ENCODE measurements at regions of chr20 and their contacts with region 1.

Region 1: DNA sequence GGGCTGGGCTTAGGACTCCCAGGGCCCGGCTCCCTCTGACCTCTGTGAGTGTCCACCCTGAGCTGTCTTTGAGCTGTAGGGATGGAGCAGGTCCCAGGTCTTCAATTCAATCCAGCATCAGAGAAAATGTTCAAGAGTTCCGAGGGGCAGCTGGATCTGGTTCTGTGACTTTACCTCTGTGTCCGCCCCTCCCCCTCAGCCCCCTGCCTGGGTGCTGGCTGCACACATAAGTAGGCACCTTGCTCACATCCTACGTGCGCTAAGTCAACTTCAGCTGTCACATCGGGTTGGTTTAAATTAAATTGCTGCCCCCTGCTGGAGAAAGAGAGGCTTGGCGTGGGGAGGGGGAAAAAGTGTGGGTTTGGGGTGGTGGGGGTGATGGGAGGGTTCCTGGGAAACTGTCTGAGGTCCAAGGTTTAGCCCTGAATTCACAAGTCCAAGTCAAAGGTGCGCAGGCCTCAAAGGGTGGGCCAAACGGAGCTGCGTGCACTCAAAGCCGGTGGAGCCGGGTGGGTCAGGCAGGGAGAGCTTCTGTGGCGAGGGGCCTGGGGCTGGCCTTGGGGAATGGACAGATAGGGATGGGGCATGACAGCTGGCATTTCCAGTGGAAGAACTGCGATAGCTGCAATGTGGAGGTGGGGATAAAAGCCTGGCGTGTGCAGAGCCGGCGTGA is 3.0 kb downstream of the WFDC5 start:
- DNase-seq: no peak
- H3K4me3 ChIP-seq: no peak overlapping the region
- H3K27ac ChIP-seq: no peak overlapping the region
- H3K4me1 ChIP-seq: peaks cover 13% of the 10 kb centered on the region
- H3K27me3 ChIP-seq: no peaks in the 10 kb centered on the region
- CTCF ChIP-seq: peak; percentile 40 to 52

Region 2: GRCh38 chr20:45067558-45067957 is 44.4 kb before region 1 on chr20:
- CTCF ChIA-PET with region 1: interaction called, 20 read pairs
- dilution Hi-C with region 1: no loop called
- in situ Hi-C with region 1: no loop called
- intact Hi-C with region 1: no loop called
- DNase-seq: peak; percentile 60
- H3K4me3 ChIP-seq: no peak overlapping the region
- H3K27ac ChIP-seq: peak overlapping the region; percentile 28
- H3K4me1 ChIP-seq: peaks cover 24% of the 10 kb centered on the region
- H3K27me3 ChIP-seq: no peaks in the 10 kb centered on the region
- CTCF ChIP-seq: no peak

Region 3: DNA sequence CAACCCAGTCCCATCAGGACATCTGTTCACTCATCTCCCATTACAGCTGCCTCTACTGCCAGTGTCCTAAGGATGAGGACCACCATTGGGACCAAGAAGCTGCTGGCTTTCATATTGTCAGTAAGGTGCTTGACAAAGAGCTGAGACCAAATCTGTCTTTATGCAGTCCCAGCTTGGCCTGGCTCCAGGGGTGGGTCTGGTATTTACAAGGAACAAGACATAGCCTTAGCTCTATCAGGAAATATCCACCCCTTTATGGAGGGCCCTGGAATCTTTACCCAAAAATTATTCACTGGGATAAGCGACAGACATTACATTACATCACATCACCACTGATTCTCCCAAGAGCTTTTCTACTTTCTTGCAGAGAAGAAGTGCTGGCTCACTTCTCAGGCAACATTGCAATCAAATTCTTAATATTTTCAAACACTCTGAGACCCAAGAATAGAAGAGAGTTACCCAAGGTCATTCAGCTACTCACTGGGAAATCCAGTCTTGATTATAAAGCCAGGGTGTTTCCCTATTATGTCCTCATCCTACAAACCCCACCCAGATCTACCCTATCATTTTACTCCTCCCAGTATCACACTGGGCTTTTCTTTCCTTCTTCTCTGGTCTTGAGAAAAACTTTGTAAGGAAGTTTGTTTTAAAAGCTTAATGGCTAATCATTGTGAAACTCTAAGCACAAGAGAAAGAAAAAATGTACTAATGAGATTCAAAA is 51.3 kb after region 1 on chr20:
- CTCF ChIA-PET with region 1: no interaction called
- dilution Hi-C with region 1: loop called (anchors 5 kb)
- in situ Hi-C with region 1: no loop called
- intact Hi-C with region 1: no loop called
- DNase-seq: no peak
- H3K4me3 ChIP-seq: no peak overlapping the region
- H3K27ac ChIP-seq: no peak overlapping the region
- H3K4me1 ChIP-seq: peaks cover 3% of the 10 kb centered on the region
- H3K27me3 ChIP-seq: no peaks in the 10 kb centered on the region
- CTCF ChIP-seq: no peak

Region 4: GRCh38 chr20:45450097-45450818 is 338.3 kb after region 1 on chr20:
- CTCF ChIA-PET with region 1: no interaction called
- dilution Hi-C with region 1: no loop called
- in situ Hi-C with region 1: no loop called
- intact Hi-C with region 1: loop called (anchors 10 kb)
- DNase-seq: peak; percentile 27
- H3K4me3 ChIP-seq: no peak overlapping the region
- H3K27ac ChIP-seq: no peak overlapping the region
- H3K4me1 ChIP-seq: no peaks in the 10 kb centered on the region
- H3K27me3 ChIP-seq: no peaks in the 10 kb centered on the region
- CTCF ChIP-seq: peak; percentile 63 to 68

Measured in mammary epithelial cell (primary cell).